Gastrocnemius medialis (tissue), 4 donors: ENCODE measurements at regions of chrX and their contacts with region 1.

Region 1: GRCh38 chrX:131792789-131793462 is 230.2 kb upstream of the STK26 start:
- DNase-seq: no peak
- ATAC-seq: no peak
- H3K4me3 ChIP-seq: peak overlapping the region in 3 of 4 donors; percentile 5 to 61 (median 55)
- H3K27ac ChIP-seq: peak overlapping the region in 2 of 4 donors; percentile 78 to 81
- H3K4me1 ChIP-seq: no peaks in the 10 kb centered on the region
- H3K27me3 ChIP-seq: no peaks in the 10 kb centered on the region
- CTCF ChIP-seq: peak in 3 of 5 experiments; percentile 43 to 71 (median 54)
- POLR2A ChIP-seq: no peak

Region 2: GRCh38 chrX:131704136-131704695 is 88.7 kb before region 1 on chrX:
- in situ Hi-C with region 1: no loop called
- intact Hi-C with region 1: loop called (anchors 2 kb)
- DNase-seq: no peak
- ATAC-seq: no peak
- H3K4me3 ChIP-seq: peak overlapping the region in 2 of 4 donors; percentile 54 to 66
- H3K27ac ChIP-seq: peak overlapping the region in 2 of 4 donors; percentile 49 to 69
- H3K4me1 ChIP-seq: no peaks in the 10 kb centered on the region
- H3K27me3 ChIP-seq: no peaks in the 10 kb centered on the region
- CTCF ChIP-seq: peak in 3 of 5 experiments; percentile 53 to 75 (median 65)
- POLR2A ChIP-seq: no peak

Region 3: GRCh38 chrX:131752489-131753198 is 40.3 kb before region 1 on chrX:
- in situ Hi-C with region 1: no loop called
- intact Hi-C with region 1: loop called (anchors 1 kb)
- DNase-seq: no peak
- ATAC-seq: no peak
- H3K4me3 ChIP-seq: peak overlapping the region in 2 of 4 donors; percentile 64
- H3K27ac ChIP-seq: peak overlapping the region in 2 of 4 donors; percentile 70 to 78
- H3K4me1 ChIP-seq: peaks cover 0 to 5% of the 10 kb centered on the region in 2 donors
- H3K27me3 ChIP-seq: no peaks in the 10 kb centered on the region
- CTCF ChIP-seq: peak in 1 of 5 experiments; percentile 25
- POLR2A ChIP-seq: no peak

Region 4: DNA sequence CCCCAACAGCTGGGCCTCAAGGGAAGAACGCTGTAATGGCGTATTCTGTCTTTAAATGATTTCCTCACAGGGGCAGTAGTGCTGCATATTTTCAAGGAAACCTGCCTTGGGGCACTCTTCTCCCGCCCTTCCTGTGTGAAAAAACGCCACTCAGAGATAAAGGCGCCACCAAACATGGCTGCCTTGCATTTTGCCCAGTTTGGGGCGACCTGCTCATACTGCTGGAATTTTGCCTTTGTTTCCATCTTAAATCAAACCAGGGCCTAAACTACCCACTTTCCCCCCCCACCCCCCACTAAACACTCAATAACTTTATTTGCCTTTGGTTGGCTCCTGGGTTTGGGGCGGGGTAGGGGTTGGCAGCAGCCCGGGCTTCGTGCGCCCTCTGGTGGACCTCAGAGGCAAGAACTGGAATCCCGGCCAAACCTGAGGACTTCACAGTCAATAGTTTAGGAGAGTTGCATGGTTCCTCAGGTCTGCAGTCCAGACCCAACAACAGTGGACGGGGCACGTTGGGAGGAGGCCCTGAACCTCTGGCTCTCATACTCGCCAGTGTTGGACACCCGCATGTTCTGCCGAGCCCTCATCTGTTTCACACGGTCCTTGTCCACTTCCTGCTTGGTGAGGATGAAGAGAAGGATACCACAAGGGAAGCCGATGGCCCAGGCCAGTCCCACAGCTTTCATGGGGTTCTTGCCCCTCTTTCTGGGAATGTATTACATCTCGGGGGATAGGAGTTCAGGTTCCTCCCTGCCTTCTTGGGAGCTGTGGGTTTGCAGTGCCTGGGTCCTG is 10.1 kb after region 1 on chrX:
- in situ Hi-C with region 1: no loop called
- intact Hi-C with region 1: loop called (anchors 1 kb)
- DNase-seq: no peak
- ATAC-seq: no peak
- H3K4me3 ChIP-seq: peak overlapping the region in 2 of 4 donors; percentile 53 to 54
- H3K27ac ChIP-seq: peak overlapping the region in 2 of 4 donors; percentile 43 to 50
- H3K4me1 ChIP-seq: peaks cover 0 to 4% of the 10 kb centered on the region in 2 donors
- H3K27me3 ChIP-seq: no peaks in the 10 kb centered on the region
- CTCF ChIP-seq: peak in 3 of 5 experiments; percentile 68 to 76 (median 72)
- POLR2A ChIP-seq: no peak

Region 5: GRCh38 chrX:132414404-132414803 is 621.5 kb after region 1 on chrX:
- in situ Hi-C with region 1: no loop called
- intact Hi-C with region 1: no loop called
- DNase-seq: no peak
- ATAC-seq: no peak
- H3K4me3 ChIP-seq: no peak overlapping the region
- H3K27ac ChIP-seq: no peak overlapping the region
- H3K4me1 ChIP-seq: no peaks in the 10 kb centered on the region
- H3K27me3 ChIP-seq: no peaks in the 10 kb centered on the region
- CTCF ChIP-seq: no peak
- POLR2A ChIP-seq: no peak

Region 6: GRCh38 chrX:133435544-133436124 is 1642.7 kb after region 1 on chrX:
- in situ Hi-C with region 1: no loop called
- intact Hi-C with region 1: loop called (anchors 5 kb)
- DNase-seq: no peak
- ATAC-seq: no peak
- H3K4me3 ChIP-seq: no peak overlapping the region
- H3K27ac ChIP-seq: no peak overlapping the region
- H3K4me1 ChIP-seq: no peaks in the 10 kb centered on the region
- H3K27me3 ChIP-seq: no peaks in the 10 kb centered on the region
- CTCF ChIP-seq: no peak
- POLR2A ChIP-seq: no peak